ENCODE measurements at regions of chr12 and their contacts with region 1.

Region 1: GRCh38 chr12:110371408-110372055 is 32.0 kb downstream of the ANAPC7 start:
- DNase-seq: no peak
- ATAC-seq: peak in 1 of 2 experiments; percentile 19; a peak in 3 of 6 replicates
- H3K4me3 ChIP-seq: no peak overlapping the region
- H3K27ac ChIP-seq: no peak overlapping the region
- H3K4me1 ChIP-seq: no peaks in the 10 kb centered on the region
- CTCF ChIP-seq: no peak
- EP300 ChIP-seq: no peak
- POLR2A ChIP-seq: no peak
- RAD21 ChIP-seq: no peak

Region 2: GRCh38 chr12:110107369-110108281 is 263.9 kb before region 1 on chr12:
- CTCF ChIA-PET with region 1: no interaction called
- POLR2A ChIA-PET with region 1: no interaction called
- DNase-seq: peak; percentile 75 to 98
- ATAC-seq: peak; percentile 58 to 73
- H3K4me3 ChIP-seq: peak overlapping the region; percentile 9; the same call in 2 of the 3 replicates
- H3K27ac ChIP-seq: peak overlapping the region; percentile 95 to 96
- H3K4me1 ChIP-seq: peaks cover 58% of the 10 kb centered on the region
- CTCF ChIP-seq: no peak
- EP300 ChIP-seq: peak; percentile 72 to 89; a peak in 4 of 5 replicates
- POLR2A ChIP-seq: no peak; the same call in 1 of the 2 replicates
- RAD21 ChIP-seq: no peak

Region 3: GRCh38 chr12:110355073-110355472 is 16.5 kb before region 1 on chr12:
- CTCF ChIA-PET with region 1: interaction called, 27 read pairs
- POLR2A ChIA-PET with region 1: interaction called, 3 read pairs
- DNase-seq: peak; percentile 68 to 74
- ATAC-seq: peak; percentile 63 to 73
- H3K4me3 ChIP-seq: no peak overlapping the region
- H3K27ac ChIP-seq: no peak overlapping the region
- H3K4me1 ChIP-seq: no peaks in the 10 kb centered on the region
- CTCF ChIP-seq: peak; percentile 34
- EP300 ChIP-seq: no peak
- POLR2A ChIP-seq: no peak
- RAD21 ChIP-seq: peak in 1 of 2 experiments; percentile 43; a peak in 2 of 5 replicates

Region 4: DNA sequence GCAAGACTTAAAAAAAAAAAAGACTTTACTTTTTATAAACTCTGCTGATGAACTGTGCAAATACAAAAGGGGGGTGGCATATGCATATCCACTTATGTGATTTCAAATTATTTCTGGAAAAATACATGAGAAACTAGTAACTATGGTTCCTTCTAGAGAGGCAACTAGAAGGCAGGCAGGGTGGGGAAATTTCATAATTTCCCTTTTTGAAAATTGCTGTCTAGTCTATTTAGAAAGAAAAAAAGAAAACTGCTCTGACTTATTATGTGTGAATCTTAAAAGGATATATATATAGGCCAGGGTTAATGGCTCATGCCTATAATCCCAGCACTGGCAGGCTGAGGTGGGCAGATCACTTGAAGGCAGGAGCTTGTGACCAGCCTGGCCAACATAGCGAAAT is 10.3 kb before region 1 on chr12:
- CTCF ChIA-PET with region 1: interaction called, 27 read pairs
- POLR2A ChIA-PET with region 1: interaction called, 3 read pairs
- DNase-seq: no peak
- ATAC-seq: no peak
- H3K4me3 ChIP-seq: no peak overlapping the region
- H3K27ac ChIP-seq: no peak overlapping the region
- H3K4me1 ChIP-seq: no peaks in the 10 kb centered on the region
- CTCF ChIP-seq: no peak
- EP300 ChIP-seq: no peak
- POLR2A ChIP-seq: no peak
- RAD21 ChIP-seq: no peak

Region 5: GRCh38 chr12:110403146-110403975 is 31.8 kb after region 1 on chr12 and contains the start of gene ANAPC7:
- CTCF ChIA-PET with region 1: no interaction called
- POLR2A ChIA-PET with region 1: no interaction called
- DNase-seq: peak; percentile 93 to 96
- ATAC-seq: peak; percentile 96 to 98
- H3K4me3 ChIP-seq: peak within 1 kb of the TSS; percentile 69
- H3K27ac ChIP-seq: peak within 1 kb of the TSS; percentile 96 to 98
- H3K4me1 ChIP-seq: peaks cover 9% of the 10 kb centered on the region; the same call in 2 of the 3 replicates
- CTCF ChIP-seq: no peak
- EP300 ChIP-seq: no peak
- POLR2A ChIP-seq: peak; percentile 88
- RAD21 ChIP-seq: no peak
- polyA plus RNA-seq, gene ANAPC7: 107 and 122 TPM in 2 replicates

Measured in A549 (cell line).